ENCODE measurements at regions of chr7 and their contacts with region 1.

Region 1: DNA sequence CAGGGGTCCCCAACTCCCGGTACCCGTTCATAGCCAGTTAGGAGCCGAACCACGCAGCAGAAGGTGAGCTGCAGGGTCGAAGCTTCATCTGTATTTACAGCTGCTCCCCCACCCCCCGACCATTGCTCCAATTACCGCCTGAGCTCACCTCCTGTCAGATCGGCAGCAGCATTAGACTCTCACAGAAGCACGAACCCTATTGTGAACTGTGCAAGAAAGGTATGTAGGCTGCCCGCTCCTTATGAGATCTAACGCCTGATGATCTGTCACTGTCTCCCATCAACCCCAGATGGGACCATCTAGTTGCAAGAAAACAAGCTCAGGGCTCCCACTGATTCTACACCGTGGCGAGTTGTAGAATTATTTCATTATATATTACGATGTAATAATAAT is 14.6 kb upstream of the AZGP1 start:
- DNase-seq: peak; percentile 15
- H3K4me3 ChIP-seq: no peak overlapping the region
- H3K27ac ChIP-seq: no peak overlapping the region
- H3K4me1 ChIP-seq: no peaks in the 10 kb centered on the region
- H3K27me3 ChIP-seq: peaks cover 9% of the 10 kb centered on the region in 2 experiments
- CTCF ChIP-seq: no peak
- POLR2A ChIP-seq: no peak

Region 2: DNA sequence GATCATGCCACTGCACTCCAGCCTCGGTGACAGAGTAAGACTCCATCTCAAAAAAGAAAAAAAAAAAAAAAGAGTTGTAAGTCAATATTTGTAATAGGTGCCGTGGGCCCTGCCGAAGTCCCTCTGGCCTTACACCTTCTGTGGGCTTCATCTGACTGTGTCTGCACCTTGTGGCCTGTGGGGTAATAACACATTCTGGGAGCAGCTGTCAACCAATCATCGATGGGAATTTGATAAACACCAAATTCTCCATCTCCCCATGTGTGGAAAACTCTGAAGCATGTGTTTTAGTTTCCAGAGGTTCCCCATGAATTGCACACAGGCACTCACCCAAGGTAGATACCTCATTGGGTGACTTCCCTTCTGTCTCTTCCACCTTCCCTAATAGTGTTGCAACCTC is 501.2 kb before region 1 on chr7:
- CTCF ChIA-PET with region 1: no interaction called
- POLR2A ChIA-PET with region 1: no interaction called
- dilution Hi-C with region 1: no loop called
- intact Hi-C with region 1: no loop called
- DNase-seq: no peak
- H3K4me3 ChIP-seq: no peak overlapping the region
- H3K27ac ChIP-seq: no peak overlapping the region
- H3K4me1 ChIP-seq: peaks cover 6% of the 10 kb centered on the region
- H3K27me3 ChIP-seq: no peaks in the 10 kb centered on the region
- CTCF ChIP-seq: no peak
- POLR2A ChIP-seq: no peak

Region 3: GRCh38 chr7:99910976-99911375 is 79.5 kb before region 1 on chr7:
- CTCF ChIA-PET with region 1: interaction called, 153 read pairs
- POLR2A ChIA-PET with region 1: no interaction called
- dilution Hi-C with region 1: no loop called
- intact Hi-C with region 1: loop called (anchors 1 kb)
- DNase-seq: no peak
- H3K4me3 ChIP-seq: no peak overlapping the region
- H3K27ac ChIP-seq: no peak overlapping the region
- H3K4me1 ChIP-seq: no peaks in the 10 kb centered on the region
- H3K27me3 ChIP-seq: no peaks in the 10 kb centered on the region
- CTCF ChIP-seq: no peak
- POLR2A ChIP-seq: no peak

Region 4: DNA sequence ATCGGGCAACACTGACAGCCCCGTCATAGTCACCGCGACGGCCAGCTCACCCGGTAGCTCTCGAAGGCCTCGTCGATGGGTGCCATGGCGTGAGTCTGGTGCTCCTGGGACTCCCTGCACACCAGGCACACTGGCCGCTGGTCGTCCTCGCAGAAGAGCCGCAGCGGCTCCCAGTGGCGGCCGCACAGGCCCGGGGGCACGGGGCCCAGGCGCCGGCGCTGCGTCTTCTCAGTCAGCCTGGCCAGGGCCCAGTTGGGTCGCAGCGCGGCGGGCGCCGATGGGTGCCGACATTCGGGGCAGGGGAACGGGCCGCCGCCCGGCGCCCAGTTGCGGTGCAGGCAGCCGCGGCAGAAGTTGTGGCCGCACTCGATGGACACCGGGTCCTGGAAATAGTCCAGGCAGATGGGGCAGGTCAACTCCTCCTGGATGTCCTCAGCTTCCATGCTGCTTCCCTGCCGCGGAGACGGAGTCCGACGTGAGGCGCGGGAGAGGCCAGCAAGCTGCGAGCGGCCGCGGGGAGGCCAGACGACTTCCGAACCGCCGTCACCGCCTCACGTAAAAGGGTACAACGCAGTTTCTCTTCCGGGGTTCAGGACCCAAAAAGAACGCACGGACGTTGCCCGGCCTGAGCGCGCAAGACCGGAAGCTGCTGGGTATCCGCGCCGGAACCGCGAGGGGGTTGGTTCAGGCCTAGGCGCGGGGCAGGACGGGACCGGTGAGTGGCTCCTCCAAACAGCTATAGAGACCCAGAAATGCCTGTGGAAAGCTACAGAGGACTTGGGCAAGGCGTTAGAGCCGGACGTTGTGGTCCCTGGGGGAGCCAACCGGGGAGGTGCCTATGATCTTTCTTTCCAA is 71.3 kb before region 1 on chr7 and contains the start of gene TRIM4:
- CTCF ChIA-PET with region 1: interaction called, 153 read pairs
- POLR2A ChIA-PET with region 1: interaction called, 4 read pairs
- dilution Hi-C with region 1: no loop called
- intact Hi-C with region 1: no loop called
- DNase-seq: peak; percentile 90
- H3K4me3 ChIP-seq: peak within 1 kb of the TSS; percentile 51 to 84 (median 58)
- H3K27ac ChIP-seq: peak within 1 kb of the TSS; percentile 63
- H3K4me1 ChIP-seq: peaks cover 17% of the 10 kb centered on the region
- H3K27me3 ChIP-seq: no peaks in the 10 kb centered on the region
- CTCF ChIP-seq: peak; percentile 13 to 42
- POLR2A ChIP-seq: peak; percentile 77
- total RNA-seq, gene TRIM4: 19.1 and 22.1 TPM in 2 replicates

Region 5: GRCh38 chr7:99928994-99929729 is 61.3 kb before region 1 on chr7 and contains the start of gene GJC3:
- CTCF ChIA-PET with region 1: interaction called, 15 read pairs
- POLR2A ChIA-PET with region 1: no interaction called
- dilution Hi-C with region 1: no loop called
- intact Hi-C with region 1: no loop called
- DNase-seq: peak; percentile 80
- H3K4me3 ChIP-seq: peak within 1 kb of the TSS in 2 of 3 experiments; percentile 14 to 39
- H3K27ac ChIP-seq: no peak within 1 kb of the TSS
- H3K4me1 ChIP-seq: peaks cover 13% of the 10 kb centered on the region
- H3K27me3 ChIP-seq: peaks cover 12 to 29% of the 10 kb centered on the region in 2 experiments
- CTCF ChIP-seq: peak; percentile 22 to 41
- POLR2A ChIP-seq: peak; percentile 41
- total RNA-seq, gene GJC3: not detected in 2 replicates

Region 6: DNA sequence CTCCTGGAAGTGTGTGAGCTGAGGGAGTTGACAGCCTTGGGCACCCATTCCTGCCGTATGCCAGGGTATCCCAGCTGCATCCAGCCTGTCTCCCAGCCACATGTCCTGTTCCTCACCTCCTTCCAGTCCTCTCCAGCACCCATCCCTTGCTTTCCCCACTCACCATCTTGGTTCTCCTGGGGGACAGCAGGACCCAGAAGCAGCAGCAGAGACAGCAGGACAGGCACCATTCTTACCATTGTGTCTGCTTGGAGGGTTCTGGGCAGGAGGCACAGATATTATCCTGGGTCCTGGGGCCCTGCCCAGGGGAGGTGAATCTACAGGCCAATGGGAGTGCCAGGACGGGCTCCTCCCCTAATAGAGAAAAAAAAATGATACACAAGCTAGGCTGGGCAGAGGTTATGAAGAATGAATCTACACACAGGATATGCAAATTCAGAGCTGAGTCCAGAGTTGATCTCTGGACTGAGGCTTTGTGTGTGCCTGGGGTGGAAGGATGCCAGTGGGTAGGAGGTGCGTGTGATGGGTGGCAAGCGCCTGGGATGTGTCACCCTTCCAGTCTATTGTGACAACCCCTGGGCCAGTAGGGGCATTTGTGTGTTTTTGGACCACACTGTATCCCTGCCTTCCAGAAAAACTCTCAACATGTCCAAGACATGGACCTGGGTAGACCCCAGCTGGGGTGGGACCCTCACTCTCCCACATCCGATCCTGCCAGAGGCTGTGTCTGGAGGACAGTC is 14.5 kb before region 1 on chr7 and contains the start of gene AZGP1:
- CTCF ChIA-PET with region 1: interaction called, 49 read pairs
- POLR2A ChIA-PET with region 1: no interaction called
- dilution Hi-C with region 1: no loop called
- intact Hi-C with region 1: loop called (anchors 1 kb)
- DNase-seq: no peak
- H3K4me3 ChIP-seq: no peak within 1 kb of the TSS
- H3K27ac ChIP-seq: no peak within 1 kb of the TSS
- H3K4me1 ChIP-seq: no peaks in the 10 kb centered on the region
- H3K27me3 ChIP-seq: peaks cover 0 to 5% of the 10 kb centered on the region in 2 experiments
- CTCF ChIP-seq: no peak
- POLR2A ChIP-seq: no peak
- total RNA-seq, gene AZGP1: not detected in 2 replicates

Region 7: GRCh38 chr7:100126931-100127865 is 136.7 kb after region 1 on chr7 and contains the start of gene MBLAC1:
- CTCF ChIA-PET with region 1: interaction called, 14 read pairs
- POLR2A ChIA-PET with region 1: no interaction called
- dilution Hi-C with region 1: no loop called
- intact Hi-C with region 1: loop called (anchors 5 kb)
- DNase-seq: peak; percentile 88
- H3K4me3 ChIP-seq: peak within 1 kb of the TSS; percentile 86 to 96 (median 93)
- H3K27ac ChIP-seq: peak within 1 kb of the TSS; percentile 94
- H3K4me1 ChIP-seq: peaks cover 11% of the 10 kb centered on the region
- H3K27me3 ChIP-seq: no peaks in the 10 kb centered on the region
- CTCF ChIP-seq: no peak
- POLR2A ChIP-seq: peak; percentile 92
- total RNA-seq, gene MBLAC1: 1.3 and 1.8 TPM in 2 replicates

Region 8: GRCh38 chr7:100208911-100209408 is 218.5 kb after region 1 on chr7:
- CTCF ChIA-PET with region 1: no interaction called
- POLR2A ChIA-PET with region 1: no interaction called
- dilution Hi-C with region 1: no loop called
- intact Hi-C with region 1: loop called (anchors 2 kb)
- DNase-seq: no peak
- H3K4me3 ChIP-seq: no peak overlapping the region
- H3K27ac ChIP-seq: no peak overlapping the region
- H3K4me1 ChIP-seq: no peaks in the 10 kb centered on the region
- H3K27me3 ChIP-seq: peaks cover 14 to 25% of the 10 kb centered on the region in 2 experiments
- CTCF ChIP-seq: no peak
- POLR2A ChIP-seq: no peak